PC-3 (cell line): ENCODE measurements at regions of chr17 and their contacts with region 1.

Region 1: GRCh38 chr17:48215583-48216139 is 108.1 kb downstream of the SNX11 start:
- DNase-seq: peak; percentile 83
- ATAC-seq: peak; percentile 99
- H3K4me3 ChIP-seq: no peak overlapping the region
- H3K27ac ChIP-seq: no peak overlapping the region
- H3K4me1 ChIP-seq: no peaks in the 10 kb centered on the region
- H3K27me3 ChIP-seq: no peaks in the 10 kb centered on the region
- CTCF ChIP-seq: peak; percentile 95

Region 2: DNA sequence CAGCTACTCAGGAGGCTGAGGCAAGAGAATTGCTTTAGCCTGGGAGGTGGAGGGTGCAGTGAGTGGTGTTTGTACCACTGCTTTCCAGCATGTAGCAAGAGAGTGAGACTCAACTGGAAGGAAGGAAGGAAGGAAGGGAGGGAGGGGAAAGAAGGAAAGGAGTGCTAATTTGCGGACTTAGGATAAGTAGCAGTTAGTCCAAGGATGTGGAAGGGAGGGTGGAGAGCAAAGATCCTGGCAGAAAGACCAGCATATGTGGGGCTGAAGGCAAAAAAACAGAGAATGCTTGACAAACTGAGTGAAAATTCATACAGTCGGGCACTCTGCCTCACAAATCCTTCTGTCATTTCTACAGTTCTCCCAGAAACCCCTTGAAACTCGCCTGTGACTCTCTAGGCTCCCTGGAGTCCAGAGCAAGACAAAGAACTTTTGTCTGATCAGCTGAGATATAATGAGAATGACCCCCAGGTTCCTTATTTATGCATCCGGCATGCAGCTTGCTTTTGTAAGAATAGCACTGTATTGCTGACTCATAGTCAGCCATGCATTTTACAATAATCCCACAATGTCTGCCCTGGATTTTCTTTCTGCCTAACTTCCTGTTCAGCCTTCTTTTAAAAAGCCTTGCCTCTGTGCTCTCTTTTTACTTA is 213.3 kb before region 1 on chr17:
- CTCF ChIA-PET with region 1: no interaction called
- POLR2A ChIA-PET with region 1: no interaction called
- intact Hi-C with region 1: no loop called
- DNase-seq: peak; percentile 94
- ATAC-seq: peak; percentile 87
- H3K4me3 ChIP-seq: peak overlapping the region; percentile 29; the same call in 1 of the 2 replicates
- H3K27ac ChIP-seq: peak overlapping the region; percentile 97
- H3K4me1 ChIP-seq: peaks cover 54% of the 10 kb centered on the region
- H3K27me3 ChIP-seq: no peaks in the 10 kb centered on the region
- CTCF ChIP-seq: no peak

Region 3: DNA sequence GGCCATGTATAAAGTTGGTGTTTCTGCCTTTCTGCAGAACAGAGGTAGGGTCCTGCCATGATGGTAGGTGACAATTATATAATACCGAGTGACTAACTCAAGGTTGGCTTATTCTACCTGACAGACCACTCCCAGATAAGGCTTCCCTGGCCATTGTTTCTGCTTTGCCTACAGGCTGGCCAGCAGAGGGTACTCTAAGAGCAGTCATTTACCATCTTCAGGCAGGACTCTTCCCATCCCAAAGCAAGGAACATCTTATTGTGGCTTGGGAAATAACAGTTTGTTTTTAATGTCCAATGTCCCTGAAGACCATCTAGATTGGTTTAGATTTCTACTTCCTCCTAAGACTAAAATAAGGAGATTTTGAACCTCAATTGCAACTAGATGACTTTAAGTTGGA is 34.0 kb before region 1 on chr17:
- CTCF ChIA-PET with region 1: interaction called, 10 read pairs
- POLR2A ChIA-PET with region 1: no interaction called
- intact Hi-C with region 1: loop called (anchors 2 kb)
- DNase-seq: peak; percentile 69
- ATAC-seq: peak; percentile 77
- H3K4me3 ChIP-seq: no peak overlapping the region
- H3K27ac ChIP-seq: no peak overlapping the region
- H3K4me1 ChIP-seq: peaks cover 11% of the 10 kb centered on the region
- H3K27me3 ChIP-seq: peaks cover 10% of the 10 kb centered on the region; the same call in 1 of the 2 replicates
- CTCF ChIP-seq: peak; percentile 92

Region 4: GRCh38 chr17:48192321-48192731 is 23.3 kb before region 1 on chr17:
- CTCF ChIA-PET with region 1: no interaction called
- POLR2A ChIA-PET with region 1: no interaction called
- intact Hi-C with region 1: no loop called
- DNase-seq: peak; percentile 34
- ATAC-seq: no peak
- H3K4me3 ChIP-seq: no peak overlapping the region
- H3K27ac ChIP-seq: no peak overlapping the region
- H3K4me1 ChIP-seq: peaks cover 33% of the 10 kb centered on the region
- H3K27me3 ChIP-seq: no peaks in the 10 kb centered on the region
- CTCF ChIP-seq: no peak

Region 5: DNA sequence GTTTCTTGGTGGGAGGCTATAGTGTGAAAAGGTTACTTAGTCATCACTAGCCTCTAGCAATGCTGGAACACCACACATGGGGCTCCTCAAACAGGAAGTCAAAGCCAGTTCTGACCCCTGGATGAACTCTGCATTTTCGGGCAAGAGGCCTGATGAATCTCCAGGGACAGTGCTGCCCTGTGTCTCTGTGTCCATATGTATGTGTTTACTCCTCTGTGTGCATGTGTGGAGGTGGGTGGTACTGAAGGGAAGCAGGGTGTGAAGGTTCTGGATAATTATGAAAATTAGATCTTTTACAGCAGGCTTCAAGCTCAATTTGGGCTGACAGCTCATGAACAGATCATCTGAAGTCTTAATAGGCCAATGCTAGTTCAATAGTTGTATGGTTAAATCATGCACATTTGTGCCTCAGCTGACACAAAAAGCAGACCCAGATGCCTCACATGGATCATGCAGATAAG is 25.5 kb after region 1 on chr17:
- CTCF ChIA-PET with region 1: interaction called, 10 read pairs
- POLR2A ChIA-PET with region 1: interaction called, 10 read pairs
- intact Hi-C with region 1: no loop called
- DNase-seq: peak; percentile 87
- ATAC-seq: peak; percentile 29; the same call in 1 of the 2 replicates
- H3K4me3 ChIP-seq: no peak overlapping the region
- H3K27ac ChIP-seq: peak overlapping the region; percentile 89
- H3K4me1 ChIP-seq: peaks cover 94% of the 10 kb centered on the region
- H3K27me3 ChIP-seq: no peaks in the 10 kb centered on the region
- CTCF ChIP-seq: no peak

Region 6: DNA sequence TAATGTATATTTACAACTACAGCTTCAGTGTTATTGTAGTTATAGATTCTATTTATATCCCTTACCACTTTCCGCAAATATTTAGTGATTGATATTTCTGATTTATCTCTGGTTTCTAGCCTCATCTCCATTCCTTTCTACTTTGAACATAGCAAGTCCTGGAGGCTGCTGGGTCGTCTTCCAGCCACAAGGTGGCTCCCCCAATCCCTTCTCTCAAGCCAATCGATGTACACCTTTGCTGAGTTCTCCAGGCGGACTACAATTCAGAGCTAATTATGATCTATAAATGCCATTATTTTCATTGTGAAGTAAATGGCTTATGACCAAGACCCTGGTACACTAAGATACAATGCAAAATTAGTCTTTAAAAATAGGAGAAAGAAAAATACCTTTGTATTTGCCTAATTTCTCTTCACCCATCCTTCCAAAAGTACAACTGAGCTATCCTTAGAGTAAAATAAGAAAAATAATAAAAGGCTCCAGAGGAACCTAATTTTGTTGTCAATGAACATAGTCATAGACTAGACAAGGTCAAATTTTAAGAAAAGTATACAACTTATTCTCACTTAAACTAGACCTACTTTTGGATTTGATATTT is 92.3 kb after region 1 on chr17:
- CTCF ChIA-PET with region 1: interaction called, 11 read pairs
- POLR2A ChIA-PET with region 1: interaction called, 10 read pairs
- intact Hi-C with region 1: no loop called
- DNase-seq: peak; percentile 84
- ATAC-seq: peak; percentile 98
- H3K4me3 ChIP-seq: no peak overlapping the region
- H3K27ac ChIP-seq: no peak overlapping the region
- H3K4me1 ChIP-seq: no peaks in the 10 kb centered on the region
- H3K27me3 ChIP-seq: peaks cover 39% of the 10 kb centered on the region
- CTCF ChIP-seq: peak; percentile 98

Region 7: DNA sequence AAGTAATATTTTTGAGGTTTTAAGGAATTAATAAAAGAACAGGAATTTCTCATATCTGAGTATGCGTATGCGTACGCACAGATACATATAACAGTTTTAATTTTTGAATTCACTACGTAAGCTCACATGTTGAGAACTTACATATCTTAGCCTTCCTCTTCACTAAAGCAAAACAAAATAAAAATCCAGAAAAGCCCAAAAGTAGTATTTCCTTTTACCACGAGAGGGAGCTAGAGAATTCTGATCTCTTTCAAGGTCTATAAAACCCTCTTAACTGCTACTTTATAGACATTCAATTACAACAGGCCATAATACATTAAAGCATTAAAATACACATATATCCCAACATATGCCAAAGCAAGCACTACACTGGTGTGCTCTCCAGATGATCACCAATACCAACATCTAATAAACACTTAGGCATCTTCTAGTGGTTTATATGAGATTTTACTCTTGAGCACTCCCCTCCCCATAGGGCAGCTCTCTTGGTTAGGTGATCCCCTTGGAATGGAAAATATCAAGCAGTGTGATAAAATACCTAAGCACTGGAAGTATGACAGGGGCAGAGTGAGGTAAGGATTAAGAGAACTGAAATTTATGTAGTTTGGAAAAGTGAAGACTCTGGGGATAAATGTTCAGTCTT is 120.3 kb after region 1 on chr17:
- CTCF ChIA-PET with region 1: no interaction called
- POLR2A ChIA-PET with region 1: no interaction called
- intact Hi-C with region 1: loop called (anchors 5 kb)
- DNase-seq: peak; percentile 96
- ATAC-seq: peak; percentile 64
- H3K4me3 ChIP-seq: no peak overlapping the region
- H3K27ac ChIP-seq: no peak overlapping the region
- H3K4me1 ChIP-seq: peaks cover 13% of the 10 kb centered on the region
- H3K27me3 ChIP-seq: no peaks in the 10 kb centered on the region; the same call in 1 of the 2 replicates
- CTCF ChIP-seq: peak; percentile 93

Region 8: GRCh38 chr17:48618256-48618897 is 402.7 kb after region 1 on chr17:
- CTCF ChIA-PET with region 1: no interaction called
- POLR2A ChIA-PET with region 1: no interaction called
- intact Hi-C with region 1: loop called (anchors 1 kb)
- DNase-seq: peak; percentile 97
- ATAC-seq: peak; percentile 66
- H3K4me3 ChIP-seq: peak overlapping the region; percentile 80
- H3K27ac ChIP-seq: no peak overlapping the region
- H3K4me1 ChIP-seq: peaks cover 29% of the 10 kb centered on the region
- H3K27me3 ChIP-seq: peaks cover 60% of the 10 kb centered on the region
- CTCF ChIP-seq: peak; percentile 98